ENCODE measurements at regions of chr13 and their contacts with region 1.

Region 1: GRCh38 chr13:49976314-49977258 is 20.3 kb upstream of the TRIM13 start:
- DNase-seq: peak; percentile 25 to 72 (median 62)
- H3K4me3 ChIP-seq: no peak overlapping the region
- H3K27ac ChIP-seq: no peak overlapping the region
- H3K4me1 ChIP-seq: peaks cover 3% of the 10 kb centered on the region
- H3K27me3 ChIP-seq: no peaks in the 10 kb centered on the region
- CTCF ChIP-seq: peak; percentile 46 to 63 (median 46)
- EP300 ChIP-seq: no peak
- POLR2A ChIP-seq: no peak

Region 2: GRCh38 chr13:50529154-50529882 is 552.7 kb after region 1 on chr13:
- intact Hi-C with region 1: loop called in 1 of 4 experiments (anchors 10 kb)
- DNase-seq: peak; percentile 65 to 84 (median 80)
- H3K4me3 ChIP-seq: peak overlapping the region; percentile 16
- H3K27ac ChIP-seq: peak overlapping the region in 1 of 2 donors; percentile 59
- H3K4me1 ChIP-seq: peaks cover 2% of the 10 kb centered on the region
- H3K27me3 ChIP-seq: no peaks in the 10 kb centered on the region
- CTCF ChIP-seq: no peak
- EP300 ChIP-seq: no peak
- POLR2A ChIP-seq: no peak

Region 3: GRCh38 chr13:50801087-50801931 is 824.7 kb after region 1 on chr13:
- intact Hi-C with region 1: loop called in 1 of 4 experiments (anchors 10 kb)
- DNase-seq: peak in 4 of 5 donors; percentile 12 to 47 (median 20)
- H3K4me3 ChIP-seq: no peak overlapping the region
- H3K27ac ChIP-seq: no peak overlapping the region
- H3K4me1 ChIP-seq: no peaks in the 10 kb centered on the region
- H3K27me3 ChIP-seq: no peaks in the 10 kb centered on the region
- CTCF ChIP-seq: peak in 1 of 3 donors; percentile 8
- EP300 ChIP-seq: no peak
- POLR2A ChIP-seq: no peak